ENCODE measurements at regions of chr17 and their contacts with region 1.

Region 1: GRCh38 chr17:43946069-43946696 is 3.9 kb upstream of the PPY start:
- DNase-seq: peak; percentile 39
- H3K4me3 Mint-ChIP-seq: no peak overlapping the region
- H3K27ac Mint-ChIP-seq: no peak overlapping the region
- H3K4me1 Mint-ChIP-seq: peaks cover 11% of the 10 kb centered on the region
- H3K27me3 Mint-ChIP-seq: peaks cover 9% of the 10 kb centered on the region

Region 2: DNA sequence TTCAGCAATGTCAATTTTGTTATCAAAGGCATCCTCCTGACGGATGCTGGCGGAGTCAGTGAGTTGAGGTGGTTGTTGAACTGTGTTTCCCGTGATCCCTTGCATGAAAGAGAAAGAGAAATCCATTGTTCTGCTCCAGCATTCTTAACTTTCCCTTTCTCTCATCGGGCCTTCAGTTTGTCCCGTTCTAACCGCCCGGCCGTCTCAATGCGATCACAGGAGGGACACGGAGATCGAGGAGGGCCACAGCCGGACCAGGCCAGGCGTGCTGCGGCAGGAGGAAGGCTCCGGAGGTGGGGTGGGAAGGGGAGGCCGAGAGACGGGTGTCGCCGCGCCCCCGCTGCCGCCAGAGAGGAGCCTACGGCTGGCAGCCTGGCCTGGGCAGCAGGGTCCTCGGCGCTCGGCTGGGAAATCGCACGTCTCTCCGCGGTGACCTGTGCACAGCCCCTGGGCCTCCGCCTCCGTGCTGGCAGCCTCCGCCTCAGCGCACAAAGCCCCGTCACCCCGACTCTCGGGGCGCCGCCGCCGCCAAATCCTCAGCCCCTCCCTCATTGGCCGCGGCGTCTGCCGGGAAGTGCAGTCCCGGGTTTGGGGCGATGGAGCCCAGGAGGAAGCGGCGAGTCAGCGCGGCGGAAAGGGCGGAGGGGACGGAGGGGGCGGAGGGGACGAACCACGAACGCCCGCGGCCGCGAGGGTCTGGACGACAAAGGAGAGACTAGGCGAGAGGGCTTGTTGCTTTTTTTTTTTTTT is 225.7 kb before region 1 on chr17:
- CTCF ChIA-PET with region 1: no interaction called
- intact Hi-C with region 1: no loop called
- DNase-seq: peak; percentile 84
- H3K4me3 Mint-ChIP-seq: peak overlapping the region; percentile 89
- H3K27ac Mint-ChIP-seq: peak overlapping the region; percentile 95
- H3K4me1 Mint-ChIP-seq: peaks cover 18% of the 10 kb centered on the region
- H3K27me3 Mint-ChIP-seq: no peaks in the 10 kb centered on the region

Region 3: DNA sequence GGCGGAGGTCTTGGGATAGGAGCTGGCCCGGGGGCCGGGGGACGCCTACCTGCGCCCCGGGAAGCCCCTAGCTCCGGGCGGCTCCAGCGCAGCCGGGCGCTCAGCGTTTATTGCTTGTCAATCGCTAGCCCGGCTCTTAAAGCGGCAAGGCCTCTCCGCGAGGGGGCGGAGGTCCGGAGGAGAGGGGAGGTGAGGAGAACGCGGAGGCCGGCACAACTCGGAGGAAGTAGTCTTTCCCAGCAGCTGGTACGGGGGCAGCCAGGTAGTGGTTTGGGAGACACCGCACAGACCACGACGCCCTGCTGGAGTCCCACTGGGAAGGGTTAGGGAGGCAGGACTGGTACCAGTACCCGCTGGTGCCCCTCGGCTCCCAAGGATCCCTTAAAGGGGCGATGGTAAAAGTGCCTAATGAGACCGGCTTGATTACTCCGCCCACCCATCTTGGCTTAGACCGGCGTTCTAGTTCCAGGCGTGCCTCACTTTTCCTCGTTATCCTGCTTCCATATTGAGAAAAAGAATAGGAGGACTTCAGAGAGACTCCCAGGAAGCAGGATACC is 38.7 kb before region 1 on chr17 and contains the start of gene MPP2:
- CTCF ChIA-PET with region 1: interaction called, 20 read pairs
- intact Hi-C with region 1: no loop called
- DNase-seq: peak; percentile 64
- H3K4me3 Mint-ChIP-seq: peak within 1 kb of the TSS; percentile 63
- H3K27ac Mint-ChIP-seq: no peak within 1 kb of the TSS
- H3K4me1 Mint-ChIP-seq: peaks cover 18% of the 10 kb centered on the region
- H3K27me3 Mint-ChIP-seq: peaks cover 4% of the 10 kb centered on the region
- total RNA-seq, gene MPP2: 2.3 to 2.5 TPM

Region 4: GRCh38 chr17:43994272-43995149 is 48.3 kb after region 1 on chr17:
- CTCF ChIA-PET with region 1: interaction called, 51 read pairs
- intact Hi-C with region 1: loop called (anchors 1 kb)
- DNase-seq: peak; percentile 75
- H3K4me3 Mint-ChIP-seq: peak overlapping the region; percentile 39
- H3K27ac Mint-ChIP-seq: no peak overlapping the region
- H3K4me1 Mint-ChIP-seq: peaks cover 3% of the 10 kb centered on the region
- H3K27me3 Mint-ChIP-seq: peaks cover 8% of the 10 kb centered on the region

Region 5: GRCh38 chr17:44033861-44034408 is 87.8 kb after region 1 on chr17:
- CTCF ChIA-PET with region 1: no interaction called
- intact Hi-C with region 1: no loop called
- DNase-seq: no peak
- H3K4me3 Mint-ChIP-seq: no peak overlapping the region
- H3K27ac Mint-ChIP-seq: peak overlapping the region; percentile 72
- H3K4me1 Mint-ChIP-seq: peaks cover 7% of the 10 kb centered on the region
- H3K27me3 Mint-ChIP-seq: no peaks in the 10 kb centered on the region

Region 6: GRCh38 chr17:44044067-44044466 is 97.9 kb after region 1 on chr17:
- CTCF ChIA-PET with region 1: interaction called, 26 read pairs
- intact Hi-C with region 1: loop called (anchors 1 kb)
- DNase-seq: no peak
- H3K4me3 Mint-ChIP-seq: no peak overlapping the region
- H3K27ac Mint-ChIP-seq: no peak overlapping the region
- H3K4me1 Mint-ChIP-seq: peaks cover 11% of the 10 kb centered on the region
- H3K27me3 Mint-ChIP-seq: no peaks in the 10 kb centered on the region

Region 7: DNA sequence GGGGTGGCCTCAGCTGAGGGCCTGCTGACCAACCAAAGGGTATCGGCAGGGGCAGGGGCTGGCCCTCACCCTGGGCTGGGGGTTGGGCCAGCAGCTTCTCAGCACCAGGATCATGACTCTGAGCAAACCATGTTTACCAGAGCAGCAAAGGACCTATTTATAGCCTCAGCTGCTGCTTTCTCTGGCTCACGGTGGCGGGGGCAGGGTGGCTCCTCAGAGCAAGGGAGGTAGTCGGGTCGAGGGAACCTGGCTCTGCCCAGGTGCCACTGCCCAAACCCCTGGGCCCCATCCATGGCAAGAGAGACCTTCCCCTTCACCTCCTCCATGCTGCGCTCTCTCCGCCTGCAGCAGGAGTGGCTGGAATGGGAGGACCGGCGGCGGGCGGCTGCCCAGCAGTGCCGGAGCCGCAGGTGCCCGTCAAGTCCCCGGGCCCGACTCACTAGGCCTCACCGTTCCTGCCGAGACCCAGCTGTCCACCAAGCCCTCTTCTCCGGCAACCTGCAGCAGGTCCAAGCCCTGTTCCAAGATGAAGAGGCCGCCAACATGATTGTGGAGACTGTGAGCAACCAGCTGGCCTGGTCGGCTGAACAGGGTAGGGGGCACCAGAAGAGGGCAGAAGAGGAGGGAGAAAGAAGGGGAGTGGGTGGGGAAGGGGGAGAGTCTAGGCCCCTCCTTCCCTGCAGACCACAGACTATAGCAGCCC is 224.5 kb after region 1 on chr17 and contains the start of gene ASB16:
- CTCF ChIA-PET with region 1: interaction called, 12 read pairs
- intact Hi-C with region 1: loop called (anchors 1 kb)
- DNase-seq: no peak
- H3K4me3 Mint-ChIP-seq: no peak within 1 kb of the TSS
- H3K27ac Mint-ChIP-seq: no peak within 1 kb of the TSS
- H3K4me1 Mint-ChIP-seq: peaks cover 6% of the 10 kb centered on the region
- H3K27me3 Mint-ChIP-seq: no peaks in the 10 kb centered on the region
- total RNA-seq, gene ASB16: 0.12 TPM in 1 of 2 experiments, not detected in the other

Measured in activated naive CD4-positive, alpha-beta T cell treated with anti-CD3 and anti-CD28 coated beads for 36 hours (primary cell).